Calu3 (cell line): ENCODE measurements at regions of chr2 and their contacts with region 1.

Region 1: DNA sequence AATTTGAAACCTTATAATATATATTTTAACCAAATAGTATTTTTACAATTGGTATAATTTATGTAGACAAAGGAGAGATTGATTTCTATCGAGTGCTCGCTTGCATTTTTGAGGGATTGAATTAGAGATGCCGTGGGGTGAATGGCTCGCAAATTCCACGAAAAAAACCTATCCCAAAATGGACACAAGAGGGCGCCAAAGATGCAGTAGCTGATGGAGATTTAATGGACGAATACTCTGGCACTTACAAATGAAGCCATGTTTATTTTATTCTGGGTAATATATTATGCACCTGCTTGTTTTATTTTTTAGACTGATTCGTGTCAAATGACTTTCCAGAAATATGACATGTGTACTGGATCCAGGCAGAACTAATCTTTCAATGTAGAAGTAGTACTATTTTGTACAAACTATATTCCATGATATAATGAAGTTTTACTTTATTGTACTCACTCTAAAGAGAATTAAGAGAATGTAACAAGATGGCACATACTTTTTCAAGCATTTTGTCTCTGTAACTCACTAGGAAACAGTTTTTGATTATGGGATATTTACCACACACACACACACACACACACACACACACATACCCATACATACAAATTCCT is 505.4 kb downstream of the PLCL1 start:
- DNase-seq: peak; percentile 70
- H3K4me3 Mint-ChIP-seq: no peak overlapping the region
- H3K27ac Mint-ChIP-seq: no peak overlapping the region
- H3K4me1 Mint-ChIP-seq: peaks cover 13% of the 10 kb centered on the region
- H3K27me3 Mint-ChIP-seq: no peaks in the 10 kb centered on the region
- CTCF ChIP-seq: peak; percentile 77

Region 2: DNA sequence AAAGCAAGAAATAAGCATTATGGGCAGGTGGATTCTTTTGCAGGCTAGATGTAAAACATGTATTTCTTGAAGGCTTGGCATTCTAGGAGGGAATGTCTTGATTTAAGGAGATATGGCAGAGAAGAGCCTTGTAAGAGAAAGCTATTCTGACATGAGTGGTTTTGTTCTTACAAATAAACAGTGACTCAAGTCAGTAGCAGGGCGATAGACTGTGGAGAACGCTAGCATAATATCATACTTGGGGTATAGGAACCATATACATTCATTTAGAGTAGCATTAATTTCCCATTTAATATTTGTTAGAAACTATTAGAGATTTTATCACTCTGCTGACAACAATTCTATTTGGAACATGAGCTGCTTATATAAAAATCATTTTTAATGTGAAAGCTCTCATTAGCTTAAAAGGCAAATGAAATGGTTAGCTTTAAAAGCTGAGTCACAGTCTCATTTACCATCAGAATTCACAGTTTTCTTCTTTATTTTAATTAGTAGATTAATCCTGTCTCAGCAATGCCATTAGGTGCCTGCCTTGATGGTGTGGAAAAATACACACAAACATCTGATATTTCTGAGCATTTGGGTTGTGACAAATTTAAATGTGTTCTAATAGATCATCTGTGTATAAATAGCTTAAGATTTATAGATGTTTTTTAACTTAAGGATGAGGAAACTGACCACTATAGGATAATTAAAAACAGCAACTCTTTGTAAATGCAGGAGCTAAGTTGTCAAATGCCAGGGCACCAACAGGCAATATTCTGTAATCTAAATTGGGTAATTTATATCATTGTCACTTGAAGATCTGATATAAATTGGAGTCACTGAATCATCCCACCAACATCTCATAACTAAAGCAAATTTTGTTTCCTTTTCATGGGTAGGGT is 228.7 kb before region 1 on chr2:
- CTCF ChIA-PET with region 1: no interaction called
- intact Hi-C with region 1: no loop called
- DNase-seq: no peak
- H3K4me3 Mint-ChIP-seq: no peak overlapping the region
- H3K27ac Mint-ChIP-seq: no peak overlapping the region
- H3K4me1 Mint-ChIP-seq: no peaks in the 10 kb centered on the region
- H3K27me3 Mint-ChIP-seq: no peaks in the 10 kb centered on the region
- CTCF ChIP-seq: no peak

Region 3: GRCh38 chr2:198251102-198251501 is 58.7 kb before region 1 on chr2:
- CTCF ChIA-PET with region 1: no interaction called
- intact Hi-C with region 1: no loop called
- DNase-seq: no peak
- H3K4me3 Mint-ChIP-seq: no peak overlapping the region
- H3K27ac Mint-ChIP-seq: no peak overlapping the region
- H3K4me1 Mint-ChIP-seq: no peaks in the 10 kb centered on the region
- H3K27me3 Mint-ChIP-seq: no peaks in the 10 kb centered on the region
- CTCF ChIP-seq: no peak

Region 4: DNA sequence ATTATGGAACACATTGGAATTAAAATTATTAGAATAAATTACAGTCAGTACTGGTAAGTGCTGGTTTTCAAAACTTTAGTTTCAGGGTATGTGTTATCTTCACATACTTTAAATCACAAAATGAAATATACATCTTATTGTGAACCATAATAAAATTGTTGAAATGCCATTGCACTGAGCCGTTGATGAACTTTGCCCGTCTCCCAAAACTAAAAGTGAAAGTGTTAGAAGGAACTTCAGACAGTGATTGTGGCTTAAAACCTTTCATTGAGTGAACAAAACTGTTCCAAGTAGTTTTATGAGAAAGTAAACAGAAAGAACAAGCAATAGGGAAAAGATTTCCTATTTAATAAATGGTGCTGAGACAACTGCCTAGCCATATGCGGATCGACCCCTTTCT is 306.2 kb after region 1 on chr2:
- CTCF ChIA-PET with region 1: no interaction called
- intact Hi-C with region 1: loop called (anchors 10 kb)
- DNase-seq: no peak
- H3K4me3 Mint-ChIP-seq: peak overlapping the region; percentile 54
- H3K27ac Mint-ChIP-seq: peak overlapping the region; percentile 11
- H3K4me1 Mint-ChIP-seq: peaks cover 22% of the 10 kb centered on the region
- H3K27me3 Mint-ChIP-seq: no peaks in the 10 kb centered on the region
- CTCF ChIP-seq: no peak

Region 5: DNA sequence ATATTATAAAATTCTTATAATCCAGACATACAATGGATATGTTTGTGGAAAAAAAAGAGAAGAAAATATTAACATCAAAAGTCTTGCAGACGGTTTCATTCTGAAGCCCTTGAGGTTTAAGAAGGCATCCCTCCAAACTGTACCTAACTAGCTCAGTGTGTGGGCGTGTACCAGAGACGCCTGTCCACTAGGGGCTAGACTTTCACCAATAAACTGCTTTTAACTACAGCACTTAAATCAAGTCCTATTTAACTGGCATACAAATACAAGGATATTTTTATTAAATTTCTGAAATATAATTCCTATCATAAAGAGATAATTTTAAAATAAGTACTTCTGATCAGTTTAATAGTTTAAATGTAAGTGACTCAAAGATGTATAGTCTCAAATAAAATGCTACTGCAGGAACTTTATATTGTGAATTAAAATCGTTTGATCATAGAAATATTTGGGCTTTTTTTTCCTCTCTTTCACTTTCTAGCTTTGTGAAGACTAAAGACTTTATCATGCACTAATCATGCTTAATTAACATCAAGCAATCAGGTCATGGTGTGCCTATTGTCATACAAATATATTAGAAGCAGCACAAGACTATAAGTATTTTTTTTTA is 710.2 kb after region 1 on chr2:
- CTCF ChIA-PET with region 1: no interaction called
- intact Hi-C with region 1: loop called (anchors 10 kb)
- DNase-seq: peak; percentile 46
- H3K4me3 Mint-ChIP-seq: no peak overlapping the region
- H3K27ac Mint-ChIP-seq: no peak overlapping the region
- H3K4me1 Mint-ChIP-seq: no peaks in the 10 kb centered on the region
- H3K27me3 Mint-ChIP-seq: no peaks in the 10 kb centered on the region
- CTCF ChIP-seq: peak; percentile 55

Region 6: GRCh38 chr2:199488772-199489400 is 1179.1 kb after region 1 on chr2:
- CTCF ChIA-PET with region 1: interaction called, 24 read pairs
- intact Hi-C with region 1: loop called (anchors 1 kb)
- DNase-seq: peak; percentile 85
- H3K4me3 Mint-ChIP-seq: no peak overlapping the region
- H3K27ac Mint-ChIP-seq: no peak overlapping the region
- H3K4me1 Mint-ChIP-seq: no peaks in the 10 kb centered on the region
- H3K27me3 Mint-ChIP-seq: no peaks in the 10 kb centered on the region
- CTCF ChIP-seq: peak; percentile 78

Region 7: DNA sequence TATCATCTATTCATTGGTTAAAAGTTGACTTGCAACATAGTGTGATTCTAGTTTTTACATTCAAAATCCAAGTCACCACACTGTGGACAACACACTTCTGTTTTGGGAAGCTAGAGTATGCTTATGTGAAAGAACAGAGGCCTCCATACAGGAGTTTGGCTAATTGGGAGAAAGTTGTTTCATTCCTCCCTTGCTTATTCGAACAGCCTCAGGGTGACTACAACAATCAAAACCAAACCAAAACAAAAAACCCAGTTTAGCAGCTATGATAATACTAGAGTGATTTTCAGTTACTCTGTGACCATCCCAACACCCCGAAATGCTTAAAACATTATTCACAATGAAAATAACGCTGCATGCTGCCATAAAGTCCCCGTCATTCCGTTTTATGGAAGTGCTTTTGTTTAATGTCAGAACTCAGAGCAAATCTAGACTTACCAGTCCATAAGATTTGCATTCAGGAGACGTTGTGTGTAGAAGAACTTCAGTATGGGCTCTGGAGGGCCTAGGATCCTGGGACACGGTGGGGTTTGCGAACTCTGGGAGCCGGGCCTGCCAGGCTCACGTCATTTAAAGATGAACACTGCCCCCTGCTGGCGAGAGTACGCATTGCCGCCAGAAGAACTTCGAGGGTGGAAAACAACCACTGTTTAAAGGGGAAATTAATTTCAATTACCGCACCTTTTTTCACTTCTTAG is 1429.8 kb after region 1 on chr2:
- CTCF ChIA-PET with region 1: no interaction called
- intact Hi-C with region 1: loop called (anchors 5 kb)
- DNase-seq: peak; percentile 75
- H3K4me3 Mint-ChIP-seq: no peak overlapping the region
- H3K27ac Mint-ChIP-seq: no peak overlapping the region
- H3K4me1 Mint-ChIP-seq: peaks cover 16% of the 10 kb centered on the region
- H3K27me3 Mint-ChIP-seq: peaks cover 25% of the 10 kb centered on the region
- CTCF ChIP-seq: peak; percentile 94